A549 (cell line): ENCODE measurements at regions of chr10 and their contacts with region 1.

Region 1: GRCh38 chr10:5094265-5095205 is at the start of gene AKR1C3:
- DNase-seq: peak; percentile 61 to 94
- ATAC-seq: peak; percentile 78 to 86
- H3K4me3 ChIP-seq: peak within 1 kb of the TSS; percentile 87
- H3K27ac ChIP-seq: peak within 1 kb of the TSS; percentile 89 to 98
- H3K4me1 ChIP-seq: peaks cover 36% of the 10 kb centered on the region
- CTCF ChIP-seq: peak; percentile 66
- EP300 ChIP-seq: no peak
- POLR2A ChIP-seq: peak; percentile 53
- RAD21 ChIP-seq: peak; percentile 71
- polyA plus RNA-seq, gene AKR1C3: 3,820 and 4,867 TPM in 2 replicates

Region 2: DNA sequence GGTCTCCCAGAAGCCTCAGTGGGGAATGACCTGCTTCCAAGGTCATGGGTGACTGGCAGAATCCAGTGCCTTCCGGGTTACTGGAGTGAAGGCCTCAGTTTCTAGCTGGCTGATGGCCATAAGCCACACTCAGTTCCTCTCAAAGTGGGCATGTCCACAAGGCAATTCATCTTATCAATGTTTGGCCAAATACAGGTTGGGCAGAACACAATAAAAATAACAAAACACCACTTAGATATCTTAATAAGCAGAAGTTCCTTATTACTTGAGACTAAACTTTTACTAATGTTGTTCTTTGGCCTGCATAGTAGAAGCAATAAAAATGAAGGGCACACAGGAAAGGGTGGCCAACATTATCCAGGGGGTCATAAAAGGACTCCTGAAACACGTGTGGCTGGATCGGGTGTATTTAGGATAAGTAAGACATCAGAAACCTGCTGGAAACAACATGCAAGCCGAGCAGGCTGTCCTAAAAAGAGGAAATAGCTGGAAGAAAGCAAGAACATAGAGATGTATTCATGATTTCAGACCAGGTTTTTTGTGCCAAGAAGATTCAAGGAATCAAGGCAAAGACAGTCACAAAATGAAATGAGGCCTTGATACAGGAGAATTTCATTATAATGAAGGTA is 71.2 kb before region 1 on chr10:
- CTCF ChIA-PET with region 1: interaction called, 18 read pairs
- POLR2A ChIA-PET with region 1: interaction called, 3 read pairs
- DNase-seq: no peak
- ATAC-seq: no peak
- H3K4me3 ChIP-seq: no peak overlapping the region
- H3K27ac ChIP-seq: peak overlapping the region; percentile 77 to 88
- H3K4me1 ChIP-seq: peaks cover 50% of the 10 kb centered on the region
- CTCF ChIP-seq: no peak
- EP300 ChIP-seq: no peak
- POLR2A ChIP-seq: no peak
- RAD21 ChIP-seq: no peak

Region 3: GRCh38 chr10:5071411-5072198 is 22.9 kb before region 1 on chr10:
- CTCF ChIA-PET with region 1: interaction called, 4 read pairs
- POLR2A ChIA-PET with region 1: interaction called, 14 read pairs
- DNase-seq: peak; percentile 68 to 99
- ATAC-seq: peak; percentile 93
- H3K4me3 ChIP-seq: no peak overlapping the region
- H3K27ac ChIP-seq: peak overlapping the region; percentile 95 to 96
- H3K4me1 ChIP-seq: peaks cover 67% of the 10 kb centered on the region
- CTCF ChIP-seq: no peak
- EP300 ChIP-seq: peak; percentile 90 to 97; a peak in 4 of 5 replicates
- POLR2A ChIP-seq: no peak
- RAD21 ChIP-seq: peak; percentile 36 to 57; a peak in 4 of 5 replicates

Region 4: DNA sequence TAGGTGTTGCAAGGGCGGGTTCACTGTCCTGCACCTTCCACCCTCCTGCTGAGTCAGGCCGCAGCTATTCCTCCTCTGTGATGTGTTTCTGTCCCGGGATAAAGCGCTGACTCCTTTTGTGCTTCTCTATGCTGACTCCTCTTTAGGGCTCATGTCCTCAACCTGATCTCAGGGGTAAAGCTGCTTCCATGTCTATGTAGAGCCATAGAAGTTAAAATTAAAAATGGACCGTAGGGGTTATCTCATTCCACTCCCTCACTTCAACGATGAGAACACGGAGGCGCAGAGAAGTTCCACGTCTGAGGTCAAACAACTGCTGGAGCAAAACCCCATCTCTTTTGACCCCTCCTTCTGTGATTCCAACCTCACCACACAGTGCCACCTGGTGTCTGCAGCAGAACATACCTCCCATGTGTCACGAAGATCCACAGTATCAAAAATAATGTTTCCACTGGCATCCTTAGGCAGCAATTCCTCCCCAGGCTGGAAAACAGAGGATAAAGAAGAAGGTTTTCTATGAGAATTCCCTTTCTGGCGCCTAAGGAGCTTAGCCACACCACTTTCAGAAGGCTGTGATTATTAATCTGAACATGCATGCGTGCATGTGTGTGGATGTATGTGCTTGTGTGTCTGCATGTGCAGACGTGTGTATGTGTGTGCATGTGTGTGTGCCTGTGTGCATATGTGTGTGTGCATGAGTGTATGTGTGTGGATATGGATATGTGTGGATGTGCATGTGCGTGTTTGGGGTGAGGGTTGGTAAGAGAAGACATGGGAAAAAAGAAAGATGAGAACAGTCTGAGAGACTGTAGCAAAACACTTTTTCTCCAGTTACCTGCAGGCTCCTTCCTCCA is 189.0 kb after region 1 on chr10:
- CTCF ChIA-PET with region 1: interaction called, 13 read pairs
- POLR2A ChIA-PET with region 1: interaction called, 8 read pairs
- DNase-seq: peak; percentile 60 to 93
- ATAC-seq: peak; percentile 91 to 92
- H3K4me3 ChIP-seq: peak overlapping the region; percentile 1; the same call in 1 of the 3 replicates
- H3K27ac ChIP-seq: peak overlapping the region; percentile 96 to 97
- H3K4me1 ChIP-seq: peaks cover 41% of the 10 kb centered on the region
- CTCF ChIP-seq: peak; percentile 86
- EP300 ChIP-seq: 0 out of 5 replicates have a peak, but pooled peaks of 1 of the 2 experiments have one; percentile 27
- POLR2A ChIP-seq: no peak
- RAD21 ChIP-seq: peak; percentile 92 to 93